ENCODE measurements at regions of chrX and their contacts with region 1.

Region 1: GRCh38 chrX:110412971-110413721 is 54.5 kb downstream of the RTL9 start:
- DNase-seq: peak; percentile 29 to 78 (median 55)
- ATAC-seq: peak; percentile 79 to 91 (median 82)
- H3K4me3 ChIP-seq: no peak overlapping the region
- H3K4me3 Mint-ChIP-seq: no peak overlapping the region
- H3K27ac ChIP-seq: no peak overlapping the region
- H3K27ac Mint-ChIP-seq: no peak overlapping the region
- H3K4me1 ChIP-seq: peaks cover 0 to 4% of the 10 kb centered on the region in 2 experiments
- H3K4me1 Mint-ChIP-seq: peaks cover 2 to 10% (median 3%) of the 10 kb centered on the region in 3 donors
- H3K27me3 ChIP-seq: no peaks in the 10 kb centered on the region
- H3K27me3 Mint-ChIP-seq: peaks cover 2 to 44% of the 10 kb centered on the region in 2 donors

Region 2: GRCh38 chrX:110146521-110146920 is 266.6 kb before region 1 on chrX:
- CTCF ChIA-PET with region 1: interaction called, 29 to 64 read pairs
- POLR2A ChIA-PET with region 1: no interaction called
- DNase-seq: peak in 14 of 35 experiments; percentile 0 to 58 (median 10)
- ATAC-seq: peak in 3 of 4 experiments; percentile 41 to 60 (median 58)
- H3K4me3 ChIP-seq: no peak overlapping the region
- H3K4me3 Mint-ChIP-seq: no peak overlapping the region
- H3K27ac ChIP-seq: no peak overlapping the region
- H3K27ac Mint-ChIP-seq: no peak overlapping the region
- H3K4me1 ChIP-seq: peaks cover 0 to 4% of the 10 kb centered on the region in 2 experiments
- H3K4me1 Mint-ChIP-seq: peaks cover 0 to 11% (median 3%) of the 10 kb centered on the region in 3 donors
- H3K27me3 ChIP-seq: no peaks in the 10 kb centered on the region
- H3K27me3 Mint-ChIP-seq: peaks cover 0 to 7% of the 10 kb centered on the region in 2 donors

Region 3: DNA sequence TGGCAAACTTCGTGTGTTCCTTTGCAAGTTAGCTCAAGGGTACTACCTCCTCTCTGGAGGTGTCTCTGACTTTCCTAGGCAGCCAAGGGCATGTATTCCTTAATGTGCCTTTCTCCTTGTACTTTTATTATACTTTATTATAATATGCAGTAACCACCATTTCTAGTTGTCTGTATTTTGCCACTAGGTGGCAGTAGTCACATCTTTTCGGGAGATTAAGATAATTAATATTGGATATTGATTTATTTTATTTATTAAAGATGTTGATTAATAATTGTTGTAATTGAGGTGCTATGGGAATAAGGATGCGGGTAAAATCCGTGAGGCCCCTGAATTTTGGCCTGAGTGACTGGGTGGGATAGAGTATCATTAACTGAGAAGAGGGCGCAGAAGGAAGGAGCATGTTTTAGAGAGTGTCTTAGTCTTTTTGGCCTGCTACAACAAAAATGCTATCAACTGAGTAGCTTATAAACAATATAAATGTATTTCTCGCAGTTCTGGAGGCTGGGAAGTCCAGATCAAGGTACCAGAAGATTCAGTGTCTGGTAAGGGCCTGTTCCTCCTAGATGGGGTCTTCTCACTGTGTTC is 256.9 kb before region 1 on chrX:
- CTCF ChIA-PET with region 1: interaction called, 34 to 38 read pairs
- POLR2A ChIA-PET with region 1: no interaction called
- DNase-seq: peak in 1 of 35 experiments; percentile 36
- ATAC-seq: no peak
- H3K4me3 ChIP-seq: no peak overlapping the region
- H3K4me3 Mint-ChIP-seq: no peak overlapping the region
- H3K27ac ChIP-seq: no peak overlapping the region
- H3K27ac Mint-ChIP-seq: no peak overlapping the region
- H3K4me1 ChIP-seq: peaks cover 0 to 3% of the 10 kb centered on the region in 2 experiments
- H3K4me1 Mint-ChIP-seq: peaks cover 7 to 14% (median 7%) of the 10 kb centered on the region in 3 donors
- H3K27me3 ChIP-seq: no peaks in the 10 kb centered on the region
- H3K27me3 Mint-ChIP-seq: peaks cover 0 to 19% of the 10 kb centered on the region in 2 donors

Measured in T-cell (primary cell).